Activated T-helper 2 cell treated with anti-CD3 and anti-CD28 coated beads, Interferon-gamma antibody, Interleukin-2, Interleukin-4, amounts not matched to agents 10 μg/mL and 5 μg/mL and 100 μg/mL, durations not matched to agents 14 hours and 24 hours and 36 hours (primary cell): ENCODE measurements at regions of chr1 and their contacts with region 1.

Region 1: DNA sequence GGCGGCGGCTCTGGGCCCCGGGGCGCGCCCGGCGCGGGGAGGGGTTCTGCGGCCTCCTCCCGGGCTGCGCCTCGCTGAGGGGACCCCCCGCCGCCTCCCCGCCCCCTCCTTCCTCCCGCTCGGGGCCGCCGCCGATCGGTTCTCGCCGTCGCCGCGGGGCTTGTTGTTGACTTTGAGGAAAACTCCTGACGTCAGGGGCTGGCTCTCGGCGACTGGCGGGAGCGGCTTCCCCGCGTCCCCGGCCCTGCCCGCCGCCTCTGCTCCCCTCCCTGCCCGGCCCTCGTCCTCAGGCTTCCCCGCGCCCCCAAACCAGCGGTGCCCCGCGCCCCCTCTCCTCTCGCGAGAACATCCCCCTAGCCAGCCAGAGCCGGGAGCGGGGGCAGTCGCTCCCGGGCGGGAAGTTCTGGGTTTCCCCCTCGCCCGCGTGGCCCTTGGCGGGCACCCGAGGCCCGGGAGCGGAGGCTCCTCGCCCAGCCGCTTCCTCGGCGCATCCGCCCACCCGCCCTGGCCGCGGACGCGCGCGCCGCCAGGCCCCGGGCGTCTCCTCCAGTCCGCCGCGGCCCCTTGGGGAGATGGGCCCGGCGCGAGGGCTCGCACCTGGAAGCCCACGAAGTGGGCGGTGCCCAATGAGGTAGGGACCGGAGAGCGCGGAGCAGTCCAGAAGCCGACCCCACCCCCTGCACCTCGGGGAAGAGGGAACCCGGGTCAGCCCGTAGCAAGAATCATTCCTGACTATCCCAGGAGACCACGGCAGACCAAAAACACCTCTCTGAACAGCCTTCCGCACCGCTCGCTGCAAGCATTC is 611 bp upstream of the AKT3 start:
- DNase-seq: peak; percentile 73
- H3K4me3 Mint-ChIP-seq: peak overlapping the region; percentile 81
- H3K27ac Mint-ChIP-seq: peak overlapping the region; percentile 84
- H3K4me1 Mint-ChIP-seq: peaks cover 18% of the 10 kb centered on the region
- H3K27me3 Mint-ChIP-seq: peaks cover 39% of the 10 kb centered on the region

Region 2: DNA sequence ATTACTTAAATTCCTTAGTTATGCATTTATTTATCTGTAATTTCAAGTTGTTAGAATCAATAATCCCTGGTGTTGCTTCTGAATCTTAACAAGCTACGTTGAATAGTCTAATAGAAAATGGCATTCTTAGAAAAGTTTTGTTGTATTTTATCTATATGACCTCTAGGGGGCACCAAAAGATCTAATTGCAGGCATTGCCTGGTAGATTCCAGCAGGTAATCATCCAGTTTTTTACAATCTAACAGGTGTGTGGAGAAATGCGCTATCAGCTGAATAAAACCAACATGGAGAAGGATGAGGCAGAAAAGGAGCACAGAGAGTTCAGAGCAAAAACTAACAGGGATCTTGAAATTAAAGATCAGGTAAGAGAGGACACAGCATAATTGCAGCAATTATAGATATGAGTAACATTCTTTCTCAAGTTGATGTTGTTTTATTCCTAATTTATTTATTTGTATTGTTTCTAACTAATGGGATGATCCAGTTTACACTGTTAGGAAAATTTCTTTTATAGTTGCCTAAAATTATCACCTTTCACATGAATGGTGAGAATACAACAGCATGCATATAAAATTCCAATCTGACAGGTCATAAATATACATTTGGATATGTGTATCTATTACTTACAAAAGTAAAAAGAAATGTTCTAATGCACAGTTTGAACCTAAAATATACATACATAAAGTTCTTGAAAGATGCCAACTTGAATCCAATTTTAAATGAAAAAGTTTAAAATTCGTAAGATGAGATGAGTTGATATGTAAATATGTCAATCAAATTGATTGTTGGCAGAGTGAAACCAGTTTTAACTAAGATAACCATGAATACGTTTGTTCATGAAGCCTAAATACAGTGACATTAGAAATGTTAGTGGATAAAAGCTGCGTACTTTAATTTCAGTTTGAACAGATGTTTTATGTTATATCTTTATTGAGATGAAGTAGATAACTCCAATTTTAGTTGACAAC is 506.4 kb before region 1 on chr1:
- intact Hi-C with region 1: loop called (anchors 10 kb)
- DNase-seq: no peak
- H3K4me3 Mint-ChIP-seq: no peak overlapping the region
- H3K27ac Mint-ChIP-seq: no peak overlapping the region
- H3K4me1 Mint-ChIP-seq: peaks cover 2% of the 10 kb centered on the region
- H3K27me3 Mint-ChIP-seq: no peaks in the 10 kb centered on the region

Region 3: GRCh38 chr1:243559575-243560162 is 291.0 kb before region 1 on chr1:
- intact Hi-C with region 1: no loop called
- DNase-seq: no peak
- H3K4me3 Mint-ChIP-seq: no peak overlapping the region
- H3K27ac Mint-ChIP-seq: no peak overlapping the region
- H3K4me1 Mint-ChIP-seq: no peaks in the 10 kb centered on the region
- H3K27me3 Mint-ChIP-seq: no peaks in the 10 kb centered on the region

Region 4: DNA sequence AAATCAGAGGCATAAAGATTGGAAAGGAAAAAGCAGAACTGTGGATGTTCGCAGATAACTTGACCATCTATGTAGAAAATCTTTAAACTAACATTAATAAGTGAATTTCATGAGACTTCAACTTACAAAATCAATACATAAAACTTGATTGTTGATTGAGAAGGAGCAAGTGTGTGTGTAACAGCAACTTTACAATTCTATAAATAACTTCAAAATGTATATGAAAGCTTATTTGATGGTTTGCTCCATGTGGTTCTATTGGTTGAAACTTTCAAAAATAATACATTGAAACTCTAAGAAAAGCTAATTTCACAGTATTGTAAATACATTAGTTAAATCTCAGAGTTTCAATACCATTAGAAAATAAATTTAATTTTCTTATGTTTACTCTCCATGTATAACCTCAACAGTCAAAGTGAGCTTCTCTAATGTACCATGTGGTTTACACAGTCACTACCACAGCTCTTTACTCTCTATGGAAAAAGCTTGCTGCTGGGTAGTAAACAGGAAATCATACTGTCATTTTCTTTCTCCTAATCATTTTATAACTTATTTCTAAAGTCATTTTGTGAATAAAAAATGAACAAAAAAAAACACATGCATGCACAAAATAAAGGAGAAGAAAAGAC is 12.6 kb before region 1 on chr1:
- intact Hi-C with region 1: loop called (anchors 1 kb)
- DNase-seq: no peak
- H3K4me3 Mint-ChIP-seq: no peak overlapping the region
- H3K27ac Mint-ChIP-seq: peak overlapping the region; percentile 27
- H3K4me1 Mint-ChIP-seq: peaks cover 22% of the 10 kb centered on the region
- H3K27me3 Mint-ChIP-seq: no peaks in the 10 kb centered on the region

Region 5: GRCh38 chr1:244047621-244048471 is 197.2 kb after region 1 on chr1:
- intact Hi-C with region 1: loop called (anchors 1 kb)
- DNase-seq: peak; percentile 94
- H3K4me3 Mint-ChIP-seq: peak overlapping the region; percentile 95
- H3K27ac Mint-ChIP-seq: peak overlapping the region; percentile 91
- H3K4me1 Mint-ChIP-seq: peaks cover 25% of the 10 kb centered on the region
- H3K27me3 Mint-ChIP-seq: peaks cover 53% of the 10 kb centered on the region

Region 6: DNA sequence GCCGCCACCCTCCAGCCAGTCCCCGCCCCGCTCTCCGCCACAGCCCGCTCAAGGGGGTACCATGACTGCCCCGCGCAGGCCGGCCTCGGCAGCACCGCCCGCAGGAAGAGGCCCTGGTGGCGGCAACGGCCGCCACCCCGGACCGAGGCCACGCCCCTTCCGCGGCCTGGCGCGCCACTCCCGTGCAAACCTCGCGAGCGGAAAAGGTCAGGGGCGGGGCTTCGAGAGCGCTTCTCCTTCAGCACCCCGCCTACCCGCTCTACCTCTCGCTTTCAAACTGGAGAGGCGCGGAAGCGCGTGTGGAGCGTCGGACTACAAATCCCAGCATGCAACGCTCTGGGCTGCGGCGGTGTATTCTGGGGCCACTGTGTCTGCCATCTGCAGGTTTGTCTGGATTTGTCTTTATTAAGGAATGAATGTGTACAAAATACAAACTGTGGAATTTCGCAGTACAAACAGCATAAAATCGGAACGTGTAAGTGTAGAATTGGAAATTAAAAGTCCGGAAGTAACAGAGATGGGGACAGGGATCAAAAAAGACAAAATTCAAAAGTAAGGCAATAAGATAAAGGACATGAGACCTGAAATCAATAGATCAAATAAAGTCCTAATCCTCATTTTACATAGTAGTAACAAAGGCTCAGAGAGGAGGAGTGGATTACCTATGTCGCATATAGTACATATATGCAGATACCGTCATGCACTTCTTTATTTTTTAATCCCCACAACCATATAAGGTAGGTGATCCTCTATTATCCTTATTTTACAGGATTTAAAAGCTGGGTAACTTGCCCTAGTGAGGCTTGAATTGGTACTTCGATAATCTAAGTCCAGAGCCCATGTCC is 601.5 kb after region 1 on chr1:
- intact Hi-C with region 1: loop called (anchors 2 kb)
- DNase-seq: peak; percentile 98
- H3K4me3 Mint-ChIP-seq: peak overlapping the region; percentile 95
- H3K27ac Mint-ChIP-seq: peak overlapping the region; percentile 96
- H3K4me1 Mint-ChIP-seq: peaks cover 34% of the 10 kb centered on the region
- H3K27me3 Mint-ChIP-seq: no peaks in the 10 kb centered on the region